ENCODE measurements at regions of chr12 and their contacts with region 1.

Region 1: DNA sequence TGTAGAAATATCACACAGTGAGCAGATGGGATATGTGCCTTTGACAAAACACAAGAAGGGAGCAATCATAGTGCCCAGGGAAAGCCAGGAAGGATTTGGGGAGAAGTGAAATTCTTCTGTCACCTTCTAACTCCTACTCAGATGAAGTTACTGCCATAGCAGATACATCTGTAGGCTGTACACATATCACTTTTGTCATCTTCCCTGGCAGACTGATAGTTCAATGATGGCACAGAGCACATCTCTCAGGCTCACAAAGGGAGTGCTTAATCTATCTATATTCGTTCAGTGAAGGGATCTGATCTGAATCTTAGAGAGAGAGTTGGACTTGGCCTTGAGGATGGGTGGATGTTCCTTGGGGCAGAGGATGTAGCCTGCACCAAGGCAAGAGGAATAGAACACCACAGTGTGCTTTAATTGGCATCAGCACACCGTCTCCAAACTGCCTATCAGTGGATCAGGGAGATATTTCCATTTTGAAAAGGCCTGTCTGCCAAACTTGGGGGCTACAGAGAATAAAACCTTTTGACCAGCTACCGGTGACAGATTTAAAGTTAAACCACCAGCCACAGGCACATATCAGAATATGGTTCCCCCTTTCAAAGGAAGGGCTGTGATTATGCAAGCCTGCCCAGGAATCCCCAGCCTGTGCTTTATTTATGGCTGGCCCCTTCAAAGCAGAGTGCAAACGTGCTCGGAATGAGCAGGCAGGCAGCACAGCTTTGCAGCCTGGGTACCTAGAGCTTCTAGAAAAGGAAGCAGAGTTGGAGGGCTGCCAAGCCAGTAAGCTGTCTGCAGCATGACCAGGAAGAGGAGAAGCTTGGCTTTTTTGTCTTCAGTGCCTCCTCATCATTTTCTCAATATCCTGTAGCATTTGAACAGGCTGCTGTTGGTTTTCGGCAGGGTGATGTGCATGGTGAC is 165.5 kb upstream of the DYRK2 start:
- DNase-seq: peak; percentile 46 to 91 (median 85)
- ATAC-seq: peak; percentile 91
- H3K4me3 ChIP-seq: no peak overlapping the region
- H3K4me3 Mint-ChIP-seq: peak overlapping the region; percentile 12
- H3K27ac ChIP-seq: peak overlapping the region; percentile 23 to 58
- H3K27ac Mint-ChIP-seq: peak overlapping the region; percentile 80
- H3K4me1 ChIP-seq: peaks cover 40% of the 10 kb centered on the region
- H3K4me1 Mint-ChIP-seq: peaks cover 45% of the 10 kb centered on the region
- H3K27me3 ChIP-seq: no peaks in the 10 kb centered on the region
- H3K27me3 Mint-ChIP-seq: no peaks in the 10 kb centered on the region
- CTCF ChIP-seq: no peak

Region 2: DNA sequence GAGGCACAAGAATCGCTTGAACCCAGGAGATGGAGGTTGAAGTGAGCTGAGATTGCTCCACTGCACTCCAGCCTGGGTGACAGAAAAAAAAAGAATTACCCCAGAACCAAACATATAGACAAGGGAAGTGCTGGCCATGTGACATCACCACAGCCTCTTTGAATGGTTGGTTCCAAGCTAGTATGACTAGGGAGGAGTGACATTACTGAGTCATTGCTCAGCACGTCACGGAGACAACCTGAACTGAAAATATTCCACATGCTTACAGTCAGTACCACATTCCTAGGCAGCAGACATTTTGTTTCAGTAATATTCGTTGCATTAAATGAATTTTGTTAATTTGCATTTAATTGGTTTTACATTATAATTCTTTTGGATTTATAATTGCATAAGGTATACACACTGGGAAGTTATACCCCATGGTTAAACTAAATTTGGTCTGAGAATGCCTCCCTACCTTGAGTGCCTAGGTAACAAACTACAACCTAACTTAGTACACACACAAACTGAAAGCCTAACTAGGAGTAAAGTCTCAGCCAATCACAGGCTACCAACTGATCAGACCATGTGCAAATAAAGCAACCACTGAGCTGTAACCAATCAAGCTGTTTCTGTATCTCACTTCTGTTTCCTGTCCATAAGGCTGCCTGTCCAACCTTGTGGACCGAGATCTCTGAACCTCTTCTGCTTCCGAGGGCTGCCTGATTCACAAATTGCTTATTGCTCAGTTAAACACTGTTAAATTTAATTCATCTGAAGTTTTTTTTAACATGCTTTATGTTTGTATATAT is 49.4 kb before region 1 on chr12:
- CTCF ChIA-PET with region 1: no interaction called
- POLR2A ChIA-PET with region 1: no interaction called
- intact Hi-C with region 1: no loop called
- DNase-seq: no peak
- ATAC-seq: no peak
- H3K4me3 ChIP-seq: no peak overlapping the region
- H3K4me3 Mint-ChIP-seq: no peak overlapping the region
- H3K27ac ChIP-seq: no peak overlapping the region
- H3K27ac Mint-ChIP-seq: no peak overlapping the region
- H3K4me1 ChIP-seq: no peaks in the 10 kb centered on the region
- H3K4me1 Mint-ChIP-seq: peaks cover 11% of the 10 kb centered on the region
- H3K27me3 ChIP-seq: no peaks in the 10 kb centered on the region
- H3K27me3 Mint-ChIP-seq: no peaks in the 10 kb centered on the region
- CTCF ChIP-seq: no peak

Region 3: DNA sequence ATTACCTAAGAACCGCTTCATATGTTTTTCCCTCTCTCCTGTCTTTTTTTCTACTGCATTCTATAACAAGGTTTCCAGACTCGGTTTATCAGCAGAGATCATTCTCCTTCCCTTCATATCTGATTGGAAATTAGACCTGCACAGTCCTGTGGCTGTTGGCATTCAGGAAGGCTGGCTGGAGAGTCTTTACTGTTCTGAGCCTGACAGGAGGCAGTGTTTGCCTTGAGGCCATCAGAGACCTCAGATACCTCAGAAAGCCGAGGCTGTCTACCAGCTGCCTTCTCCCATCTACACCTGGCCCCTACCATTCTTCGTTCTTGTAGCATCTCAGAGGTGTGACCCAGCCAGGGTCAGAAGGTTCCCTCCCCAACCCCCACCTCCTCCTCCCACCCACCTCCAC is 31.8 kb before region 1 on chr12:
- CTCF ChIA-PET with region 1: no interaction called
- POLR2A ChIA-PET with region 1: no interaction called
- intact Hi-C with region 1: no loop called
- DNase-seq: no peak
- ATAC-seq: no peak
- H3K4me3 ChIP-seq: no peak overlapping the region
- H3K4me3 Mint-ChIP-seq: no peak overlapping the region
- H3K27ac ChIP-seq: no peak overlapping the region
- H3K27ac Mint-ChIP-seq: no peak overlapping the region
- H3K4me1 ChIP-seq: peaks cover 18% of the 10 kb centered on the region
- H3K4me1 Mint-ChIP-seq: peaks cover 56% of the 10 kb centered on the region
- H3K27me3 ChIP-seq: no peaks in the 10 kb centered on the region
- H3K27me3 Mint-ChIP-seq: no peaks in the 10 kb centered on the region
- CTCF ChIP-seq: no peak

Region 4: GRCh38 chr12:67469666-67470065 is 13.3 kb before region 1 on chr12:
- CTCF ChIA-PET with region 1: no interaction called
- POLR2A ChIA-PET with region 1: no interaction called
- intact Hi-C with region 1: loop called in 1 of 2 experiments (anchors 2 kb)
- DNase-seq: peak in 4 of 9 experiments; percentile 17 to 45 (median 34)
- ATAC-seq: peak; percentile 61
- H3K4me3 ChIP-seq: no peak overlapping the region
- H3K4me3 Mint-ChIP-seq: no peak overlapping the region
- H3K27ac ChIP-seq: no peak overlapping the region
- H3K27ac Mint-ChIP-seq: peak overlapping the region; percentile 60
- H3K4me1 ChIP-seq: peaks cover 15% of the 10 kb centered on the region
- H3K4me1 Mint-ChIP-seq: peaks cover 18% of the 10 kb centered on the region
- H3K27me3 ChIP-seq: no peaks in the 10 kb centered on the region
- H3K27me3 Mint-ChIP-seq: no peaks in the 10 kb centered on the region
- CTCF ChIP-seq: no peak

Region 5: DNA sequence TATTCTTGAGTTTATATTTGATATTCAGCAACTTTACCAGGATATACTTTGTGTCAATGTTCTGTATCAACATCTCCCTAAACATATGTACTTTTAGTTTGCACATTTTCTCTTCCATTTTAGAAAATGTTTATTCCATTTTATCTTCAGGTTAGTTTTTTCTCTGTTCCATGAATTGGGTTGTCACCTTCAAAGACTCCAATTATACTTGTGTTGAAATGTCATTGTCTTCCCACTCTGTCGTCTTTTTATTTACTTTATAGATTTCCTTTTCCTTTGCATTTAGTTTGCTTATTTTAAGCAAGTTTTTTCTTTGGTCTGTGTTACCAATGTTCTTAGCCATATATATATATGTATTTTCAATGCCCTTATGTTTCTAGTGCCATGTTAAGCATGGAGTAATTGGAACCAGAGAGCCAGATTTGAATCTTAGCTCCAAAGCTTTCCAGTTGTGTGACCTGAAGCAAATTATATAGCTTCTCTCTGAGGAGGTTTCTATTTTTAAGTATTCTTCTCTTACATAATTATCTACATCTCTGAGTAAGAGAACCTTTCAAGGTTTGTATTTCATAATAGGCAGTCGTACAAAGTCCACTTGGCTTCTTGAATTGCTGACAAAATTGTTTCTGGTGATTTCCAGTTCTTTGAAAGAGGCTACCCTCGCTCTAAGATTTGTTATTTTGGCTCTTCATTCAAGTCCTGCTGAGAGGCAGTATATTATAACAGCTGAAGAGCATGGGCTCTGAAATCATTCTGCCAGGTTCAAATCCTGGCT is 79.7 kb after region 1 on chr12:
- CTCF ChIA-PET with region 1: no interaction called
- POLR2A ChIA-PET with region 1: no interaction called
- intact Hi-C with region 1: loop called in 1 of 2 experiments (anchors 5 kb)
- DNase-seq: no peak
- ATAC-seq: no peak
- H3K4me3 ChIP-seq: no peak overlapping the region
- H3K4me3 Mint-ChIP-seq: no peak overlapping the region
- H3K27ac ChIP-seq: no peak overlapping the region
- H3K27ac Mint-ChIP-seq: no peak overlapping the region
- H3K4me1 ChIP-seq: no peaks in the 10 kb centered on the region
- H3K4me1 Mint-ChIP-seq: peaks cover 7% of the 10 kb centered on the region
- H3K27me3 ChIP-seq: no peaks in the 10 kb centered on the region
- H3K27me3 Mint-ChIP-seq: no peaks in the 10 kb centered on the region
- CTCF ChIP-seq: no peak

Measured in CD8-positive, alpha-beta T cell (primary cell).